Panc1 (cell line): ENCODE measurements at regions of chr2 and their contacts with region 1.

Region 1: GRCh38 chr2:96509114-96509846 is 4.1 kb upstream of the NEURL3 start:
- DNase-seq: no peak
- ATAC-seq: peak; percentile 87
- H3K4me3 ChIP-seq: no peak overlapping the region
- H3K27ac ChIP-seq: peak overlapping the region; percentile 61
- H3K4me1 ChIP-seq: peaks cover 42% of the 10 kb centered on the region
- H3K27me3 ChIP-seq: no peaks in the 10 kb centered on the region
- CTCF ChIP-seq: peak; percentile 98

Region 2: DNA sequence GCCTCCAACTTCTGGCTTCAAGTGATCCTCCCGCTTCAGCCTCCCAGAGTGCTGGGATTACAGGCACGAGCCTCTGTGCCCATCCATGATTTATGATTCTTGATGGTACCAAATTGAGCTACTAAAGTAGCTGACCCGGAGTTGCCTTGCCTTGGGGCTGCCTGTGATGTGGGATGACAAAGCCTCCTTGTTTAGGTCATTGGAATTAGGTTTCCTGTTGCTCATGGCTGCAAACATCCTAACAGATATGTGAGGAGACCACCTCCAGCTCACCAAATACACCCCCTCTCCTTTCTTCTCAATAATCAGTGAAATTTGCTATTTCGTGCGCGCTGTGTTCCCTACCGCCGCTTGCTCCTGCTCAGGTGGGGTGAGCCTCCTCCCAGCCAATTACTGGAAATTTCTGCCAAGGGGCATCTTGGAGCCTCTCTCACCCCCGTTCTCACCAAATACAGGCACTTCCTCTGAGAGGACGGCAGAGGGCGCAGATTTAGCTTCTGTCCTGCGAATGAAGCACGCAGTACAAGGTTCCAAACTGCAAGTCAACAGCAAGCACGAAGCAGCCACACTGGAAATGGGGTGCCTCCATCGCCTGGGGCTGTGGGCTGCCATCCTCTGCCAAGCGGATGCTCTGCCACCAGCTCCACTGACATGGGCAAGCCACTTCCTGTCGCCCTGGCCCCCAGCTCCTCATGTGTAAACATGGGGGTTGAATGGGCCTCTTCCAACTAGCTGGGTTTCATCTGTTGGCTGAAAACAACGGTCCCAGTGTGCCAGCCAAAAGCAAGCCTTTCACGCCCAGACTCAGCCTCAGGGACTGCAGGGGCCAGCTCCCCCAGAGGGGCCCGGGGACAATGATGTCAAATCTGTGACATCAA is 102.0 kb before region 1 on chr2:
- CTCF ChIA-PET with region 1: interaction called, 38 read pairs
- POLR2A ChIA-PET with region 1: interaction called, 3 read pairs
- in situ Hi-C with region 1: no loop called
- intact Hi-C with region 1: loop called (anchors 1 kb)
- DNase-seq: no peak
- ATAC-seq: peak; percentile 70
- H3K4me3 ChIP-seq: no peak overlapping the region
- H3K27ac ChIP-seq: peak overlapping the region; percentile 81
- H3K4me1 ChIP-seq: peaks cover 46% of the 10 kb centered on the region
- H3K27me3 ChIP-seq: no peaks in the 10 kb centered on the region
- CTCF ChIP-seq: peak; percentile 91

Region 3: DNA sequence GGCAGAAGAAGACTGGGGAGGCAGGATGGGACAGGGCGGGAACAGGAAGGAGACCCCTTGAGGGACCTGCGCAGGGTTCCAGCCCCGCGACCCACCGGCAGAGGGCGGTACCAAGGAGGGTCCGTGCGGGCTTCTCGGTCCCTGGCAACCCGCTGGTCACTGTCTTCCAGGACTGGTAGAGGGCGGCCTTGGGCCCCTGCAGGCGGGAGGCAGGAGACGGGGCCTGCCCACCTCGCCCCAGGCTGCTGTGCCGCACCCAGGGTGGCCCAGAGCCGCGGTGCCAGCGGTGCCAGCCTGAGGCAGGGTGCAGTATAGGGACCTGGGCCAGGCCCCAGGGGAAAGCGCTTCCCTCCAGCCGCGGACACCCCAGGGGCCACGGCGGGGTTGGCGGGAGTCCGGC is 38.6 kb before region 1 on chr2:
- CTCF ChIA-PET with region 1: interaction called, 4 read pairs
- POLR2A ChIA-PET with region 1: no interaction called
- in situ Hi-C with region 1: no loop called
- intact Hi-C with region 1: loop called (anchors 2 kb)
- DNase-seq: no peak
- ATAC-seq: peak; percentile 94
- H3K4me3 ChIP-seq: peak overlapping the region in 1 of 2 experiments; percentile 1; a peak in 2 of 4 replicates
- H3K27ac ChIP-seq: no peak overlapping the region; the same call in 1 of the 2 replicates
- H3K4me1 ChIP-seq: no peaks in the 10 kb centered on the region
- H3K27me3 ChIP-seq: no peaks in the 10 kb centered on the region
- CTCF ChIP-seq: peak; percentile 82

Region 4: DNA sequence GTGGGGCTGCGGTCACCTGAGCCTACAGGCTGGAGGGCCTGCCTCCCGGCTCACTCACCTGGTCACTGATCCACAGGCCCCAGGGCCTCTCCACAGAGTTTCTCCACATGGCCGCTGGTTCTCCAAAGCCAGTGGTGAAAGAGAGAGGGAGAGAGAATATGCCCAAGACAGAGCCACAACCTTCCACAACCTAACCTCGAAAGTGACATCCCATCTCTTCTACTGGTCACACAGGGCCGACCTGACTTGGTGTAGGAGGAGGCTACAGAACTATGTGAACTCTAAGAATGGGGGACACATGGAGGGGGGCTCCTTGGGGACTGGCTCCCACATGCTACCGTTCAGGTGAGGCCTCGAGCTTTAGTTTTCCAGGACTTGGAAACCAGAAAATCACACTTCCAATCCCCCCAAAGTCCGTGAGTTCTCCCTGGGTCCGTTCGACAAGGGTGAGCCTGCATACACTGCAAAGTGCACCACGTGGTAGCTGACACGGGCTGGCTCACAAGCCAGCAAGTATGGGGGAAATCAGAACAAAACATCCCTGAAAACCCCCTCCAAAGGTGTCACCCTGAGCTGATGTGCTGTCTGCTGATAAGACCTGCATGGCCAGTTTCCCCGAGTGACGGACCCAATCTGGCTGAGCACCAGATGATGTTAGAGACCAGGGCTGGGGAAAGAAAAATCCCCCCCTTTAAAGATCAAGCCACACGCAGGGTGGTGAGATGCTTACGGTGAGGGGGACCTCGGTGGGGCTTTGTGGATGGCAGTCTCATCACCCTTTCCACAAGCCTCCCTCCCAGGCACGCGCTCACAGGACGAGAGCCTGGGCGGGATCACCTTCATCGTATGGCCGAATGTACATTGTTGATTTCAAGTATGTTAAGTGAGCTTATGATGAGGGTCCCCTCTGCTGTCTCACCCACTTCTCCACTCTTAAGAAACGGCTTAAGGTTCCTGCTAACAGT is 414.8 kb after region 1 on chr2:
- CTCF ChIA-PET with region 1: no interaction called
- POLR2A ChIA-PET with region 1: no interaction called
- in situ Hi-C with region 1: no loop called
- intact Hi-C with region 1: no loop called
- DNase-seq: no peak
- ATAC-seq: no peak
- H3K4me3 ChIP-seq: no peak overlapping the region
- H3K27ac ChIP-seq: no peak overlapping the region
- H3K4me1 ChIP-seq: no peaks in the 10 kb centered on the region
- H3K27me3 ChIP-seq: no peaks in the 10 kb centered on the region
- CTCF ChIP-seq: no peak